ENCODE measurements at regions of chr14 and their contacts with region 1.

Region 1: DNA sequence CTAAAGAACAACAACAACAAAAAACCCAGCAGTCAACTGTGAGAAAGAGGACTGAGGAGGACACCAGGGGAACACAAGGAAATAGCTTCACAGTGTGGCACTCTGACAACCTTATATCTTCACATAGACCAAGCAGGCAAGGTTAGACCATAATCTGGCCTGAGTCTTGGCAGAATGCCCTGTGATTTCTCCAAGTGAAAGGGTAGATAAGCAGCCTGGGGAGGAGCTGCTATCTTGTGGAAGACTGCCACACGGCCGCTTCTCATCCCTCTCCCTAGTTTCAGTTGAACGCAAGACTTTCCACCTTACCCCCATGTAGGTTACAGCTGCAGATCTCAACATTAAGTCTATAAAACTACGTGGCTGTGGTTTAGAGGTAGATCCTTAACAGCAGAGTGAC is 3.7 kb downstream of the SLC25A21 start:
- DNase-seq: no peak

Region 2: DNA sequence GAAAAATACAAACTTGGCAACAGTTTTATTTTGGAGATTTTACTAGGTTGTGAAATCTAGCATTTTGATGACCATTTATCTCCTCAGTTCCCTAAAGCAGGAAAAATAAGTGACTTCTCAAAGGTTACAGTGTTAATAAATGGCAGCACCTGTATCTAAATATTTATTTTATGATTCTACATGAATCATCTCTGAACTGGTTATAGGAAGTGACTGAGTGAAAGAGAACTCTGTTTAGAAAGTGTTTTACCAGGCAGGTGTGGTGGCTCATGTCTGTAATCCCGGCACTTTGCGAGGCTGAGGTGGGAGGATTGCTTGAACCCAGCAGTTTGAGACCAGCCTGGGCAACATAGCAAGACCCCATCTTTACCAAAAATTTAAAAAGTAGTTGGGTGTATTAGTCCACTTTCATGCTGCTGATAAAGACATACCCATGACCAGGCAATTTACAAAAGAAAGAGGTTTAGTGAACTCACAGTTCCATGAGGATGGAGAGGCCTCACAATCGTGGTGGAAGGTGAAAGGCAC is 55.3 kb after region 1 on chr14:
- intact Hi-C with region 1: no loop called
- DNase-seq: no peak

Region 3: GRCh38 chr14:37834275-37834674 is 665.6 kb after region 1 on chr14:
- intact Hi-C with region 1: loop called in 1 of 2 experiments (anchors 5 kb)
- DNase-seq: no peak